Ascending aorta (tissue), 2 donors: ENCODE measurements at regions of chr9 and their contacts with region 1.

Region 1: DNA sequence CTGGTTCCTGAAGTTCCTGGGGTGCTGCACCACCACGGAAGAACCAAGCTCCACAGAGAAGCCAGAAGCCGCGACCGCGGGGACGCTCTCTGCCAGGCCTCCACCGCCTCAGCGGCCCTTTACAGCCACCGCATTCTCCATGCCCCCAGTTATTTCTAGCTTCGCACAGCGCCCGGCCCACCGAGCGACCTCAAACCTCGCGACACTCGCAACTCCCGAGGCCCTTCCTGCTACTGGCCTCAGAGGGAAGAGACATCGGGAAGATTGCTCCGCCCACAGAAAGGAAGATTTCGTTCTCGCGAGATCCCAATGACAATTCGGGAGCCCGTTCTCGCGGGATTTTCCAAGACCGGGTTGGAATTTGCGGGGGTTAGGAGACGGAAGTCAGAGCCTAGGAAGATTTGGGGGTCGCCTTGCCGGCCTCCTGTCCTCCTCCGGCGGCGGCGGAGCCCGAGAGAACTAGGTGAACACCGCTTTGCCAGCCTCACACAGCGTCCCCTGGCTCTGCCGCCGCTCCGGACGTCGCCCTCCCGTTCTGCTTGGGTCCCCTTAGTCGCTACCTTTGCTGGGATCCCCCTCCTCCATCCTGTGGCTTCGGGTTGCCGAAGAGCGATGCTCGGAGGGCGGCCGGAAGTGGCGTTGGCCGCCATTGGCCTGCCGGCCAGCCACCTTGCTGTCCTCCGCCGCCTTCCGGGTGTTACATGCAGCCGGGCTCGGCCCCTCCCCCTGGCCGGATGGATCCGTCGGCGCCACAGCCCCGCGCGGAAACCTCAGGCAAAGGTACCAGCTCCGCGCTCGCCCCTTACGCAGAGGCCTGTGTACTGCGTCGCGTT is at the start of gene ERCC6L2:
- DNase-seq: peak; percentile 89 to 98
- H3K4me3 ChIP-seq: no peak within 1 kb of the TSS
- H3K27ac ChIP-seq: no peak within 1 kb of the TSS
- H3K4me1 ChIP-seq: peaks cover 3% of the 10 kb centered on the region in 2 donors
- H3K27me3 ChIP-seq: no peaks in the 10 kb centered on the region
- CTCF ChIP-seq: no peak
- total RNA-seq, gene ERCC6L2: 22.9 TPM

Region 2: GRCh38 chr9:95317119-95317892 is 558.2 kb before region 1 on chr9 and contains the start of gene FANCC:
- intact Hi-C with region 1: loop called (anchors 2 kb)
- DNase-seq: peak; percentile 50 to 96
- H3K4me3 ChIP-seq: peak within 1 kb of the TSS; percentile 85 to 99
- H3K27ac ChIP-seq: peak within 1 kb of the TSS; percentile 88 to 91
- H3K4me1 ChIP-seq: no peaks in the 10 kb centered on the region
- H3K27me3 ChIP-seq: no peaks in the 10 kb centered on the region
- CTCF ChIP-seq: peak in 1 of 3 experiments; percentile 3
- total RNA-seq, gene FANCC: 0.64 TPM

Region 3: DNA sequence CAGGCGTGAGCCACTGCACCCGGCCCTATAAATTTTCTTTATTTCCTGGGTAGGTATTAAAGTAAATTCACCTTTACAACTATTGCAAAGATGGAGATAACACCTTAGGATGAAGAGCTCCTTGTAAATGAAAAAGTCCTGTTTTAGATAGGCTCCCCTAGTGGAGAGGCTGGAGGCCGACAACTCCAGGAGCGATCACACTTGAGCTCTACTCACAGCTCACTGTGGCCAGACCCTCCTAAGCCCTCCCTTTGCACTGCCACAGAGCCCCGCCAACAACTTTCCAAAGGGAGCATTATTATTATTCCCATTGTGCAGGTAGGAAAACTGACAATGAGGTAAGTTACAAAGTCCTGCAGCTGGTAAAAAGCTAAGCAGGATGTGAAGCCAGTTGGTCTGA is 139.2 kb before region 1 on chr9:
- intact Hi-C with region 1: no loop called
- DNase-seq: no peak
- H3K4me3 ChIP-seq: no peak overlapping the region
- H3K27ac ChIP-seq: no peak overlapping the region
- H3K4me1 ChIP-seq: no peaks in the 10 kb centered on the region
- H3K27me3 ChIP-seq: no peaks in the 10 kb centered on the region
- CTCF ChIP-seq: no peak

Region 4: GRCh38 chr9:95793924-95794828 is 81.3 kb before region 1 on chr9:
- intact Hi-C with region 1: loop called (anchors 5 kb)
- DNase-seq: no peak
- H3K4me3 ChIP-seq: no peak overlapping the region
- H3K27ac ChIP-seq: peak overlapping the region in 1 of 2 donors; percentile 2
- H3K4me1 ChIP-seq: peaks cover 4 to 8% of the 10 kb centered on the region in 2 donors
- H3K27me3 ChIP-seq: no peaks in the 10 kb centered on the region
- CTCF ChIP-seq: no peak

Region 5: GRCh38 chr9:96020792-96021550 is 145.4 kb after region 1 on chr9:
- intact Hi-C with region 1: loop called (anchors 5 kb)
- DNase-seq: no peak
- H3K4me3 ChIP-seq: peak overlapping the region; percentile 69 to 71
- H3K27ac ChIP-seq: peak overlapping the region in 1 of 2 donors; percentile 35
- H3K4me1 ChIP-seq: peaks cover 0 to 18% of the 10 kb centered on the region in 2 donors
- H3K27me3 ChIP-seq: peaks cover 7% of the 10 kb centered on the region
- CTCF ChIP-seq: no peak

Region 6: GRCh38 chr9:96048104-96048955 is 172.8 kb after region 1 on chr9:
- intact Hi-C with region 1: loop called (anchors 5 kb)
- DNase-seq: no peak
- H3K4me3 ChIP-seq: peak overlapping the region; percentile 14 to 51
- H3K27ac ChIP-seq: peak overlapping the region; percentile 85 to 88
- H3K4me1 ChIP-seq: peaks cover 4 to 21% of the 10 kb centered on the region in 2 donors
- H3K27me3 ChIP-seq: no peaks in the 10 kb centered on the region
- CTCF ChIP-seq: no peak

Region 7: DNA sequence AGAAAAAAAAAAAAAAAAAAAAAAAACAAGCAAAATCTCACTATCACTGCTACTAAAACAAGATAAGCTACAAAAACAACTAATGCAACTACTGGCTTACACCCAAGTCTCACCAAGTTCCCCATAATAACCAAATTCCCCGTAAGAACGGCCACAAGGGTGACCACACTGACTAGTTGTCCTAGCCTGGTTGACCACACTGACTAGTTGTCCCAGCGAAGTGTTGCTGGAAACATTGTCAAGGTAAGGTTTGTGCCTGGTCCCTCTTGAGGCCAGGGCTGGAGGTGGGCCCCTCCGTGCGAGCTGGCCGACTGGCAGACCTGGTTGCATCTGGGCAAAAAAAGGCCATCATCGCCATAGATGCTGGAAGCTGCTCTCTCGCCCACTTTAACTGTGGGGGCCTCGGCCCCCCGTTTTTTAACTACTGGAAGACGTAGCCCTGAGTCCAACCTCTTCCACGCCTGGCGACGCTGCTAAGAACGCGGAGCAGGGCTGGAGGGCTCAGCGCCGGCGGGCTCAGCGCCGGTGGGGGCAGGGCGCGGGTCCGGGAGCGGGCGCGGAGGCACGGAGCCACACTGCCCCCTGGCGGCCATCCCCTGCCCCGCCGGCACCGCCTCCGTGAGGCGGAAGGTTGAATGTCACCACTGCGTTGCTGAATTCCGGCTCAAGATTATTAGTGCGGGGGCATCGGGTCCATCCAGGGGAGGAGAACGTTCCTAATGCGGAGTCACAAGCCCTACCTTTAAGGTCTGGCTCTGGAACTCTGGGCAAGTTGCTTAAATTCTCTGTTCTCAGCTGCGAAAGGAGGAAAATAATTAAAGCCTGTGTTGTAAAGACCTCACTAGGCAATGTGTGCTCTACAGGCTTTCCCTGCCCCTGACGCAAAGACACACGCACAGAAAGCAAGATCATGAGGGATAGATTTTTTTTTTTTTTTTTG is 342.5 kb after region 1 on chr9:
- intact Hi-C with region 1: loop called (anchors 2 kb)
- DNase-seq: peak in 1 of 2 donors; percentile 72
- H3K4me3 ChIP-seq: peak overlapping the region; percentile 40 to 57
- H3K27ac ChIP-seq: peak overlapping the region; percentile 10 to 32
- H3K4me1 ChIP-seq: peaks cover 0 to 16% of the 10 kb centered on the region in 2 donors
- H3K27me3 ChIP-seq: no peaks in the 10 kb centered on the region
- CTCF ChIP-seq: peak; percentile 90 to 98 (median 96)